Naive thymus-derived CD4-positive, alpha-beta T cell (primary cell): ENCODE measurements at regions of chr18 and their contacts with region 1.

Region 1: DNA sequence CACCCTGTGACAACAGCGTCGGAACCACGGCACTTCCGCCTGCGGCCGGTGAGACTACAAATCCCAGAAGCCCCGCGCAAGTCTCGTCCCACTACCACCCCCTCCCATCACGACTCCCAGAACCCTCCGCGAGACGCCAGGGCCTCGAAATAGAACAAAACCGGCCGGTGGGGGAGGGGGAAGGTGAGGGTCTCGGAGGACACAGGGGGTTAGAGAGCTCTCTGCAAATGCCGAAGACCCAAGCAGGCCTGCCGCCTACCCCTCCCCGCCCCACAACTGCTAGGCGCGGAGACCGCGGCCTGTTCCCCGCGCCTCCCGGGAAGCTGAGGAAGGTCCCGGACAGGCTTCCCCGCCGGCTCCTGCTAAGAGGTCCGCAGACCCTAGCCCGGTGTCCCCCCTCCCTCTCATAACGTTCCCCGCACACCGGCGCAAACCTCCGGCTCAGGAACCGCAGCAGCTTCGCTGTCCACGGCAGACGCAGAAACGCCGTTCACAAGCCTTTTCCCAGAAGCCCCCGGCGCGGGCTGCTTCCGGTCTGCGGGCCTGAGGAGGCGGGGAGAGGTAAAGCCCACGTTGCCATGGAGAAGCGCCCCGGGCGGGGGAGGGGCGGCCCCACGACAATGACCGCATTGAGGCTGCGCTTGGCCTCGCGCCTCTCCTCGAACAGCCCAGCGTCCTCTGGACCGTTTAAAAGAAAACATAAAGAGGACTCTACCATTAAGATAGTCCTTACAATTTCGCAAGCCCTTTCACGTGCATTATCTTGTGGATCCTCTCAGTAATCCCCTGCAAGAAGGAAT is at the start of gene ZNF24:
- DNase-seq: peak; percentile 83 to 92 (median 87)
- ATAC-seq: peak; percentile 92
- H3K4me3 ChIP-seq: peak within 1 kb of the TSS; percentile 96
- H3K4me3 Mint-ChIP-seq: peak within 1 kb of the TSS; percentile 93 to 100 (median 98)
- H3K27ac ChIP-seq: peak within 1 kb of the TSS; percentile 100
- H3K27ac Mint-ChIP-seq: peak within 1 kb of the TSS; percentile 91 to 98 (median 98)
- H3K4me1 ChIP-seq: peaks cover 23 to 25% of the 10 kb centered on the region in 2 donors
- H3K4me1 Mint-ChIP-seq: peaks cover 30 to 56% (median 45%) of the 10 kb centered on the region in 7 donors
- H3K27me3 ChIP-seq: no peaks in the 10 kb centered on the region
- H3K27me3 Mint-ChIP-seq: no peaks in the 10 kb centered on the region
- total RNA-seq, gene ZNF24: 55.6 to 98.1 (median 80.8) TPM

Region 2: DNA sequence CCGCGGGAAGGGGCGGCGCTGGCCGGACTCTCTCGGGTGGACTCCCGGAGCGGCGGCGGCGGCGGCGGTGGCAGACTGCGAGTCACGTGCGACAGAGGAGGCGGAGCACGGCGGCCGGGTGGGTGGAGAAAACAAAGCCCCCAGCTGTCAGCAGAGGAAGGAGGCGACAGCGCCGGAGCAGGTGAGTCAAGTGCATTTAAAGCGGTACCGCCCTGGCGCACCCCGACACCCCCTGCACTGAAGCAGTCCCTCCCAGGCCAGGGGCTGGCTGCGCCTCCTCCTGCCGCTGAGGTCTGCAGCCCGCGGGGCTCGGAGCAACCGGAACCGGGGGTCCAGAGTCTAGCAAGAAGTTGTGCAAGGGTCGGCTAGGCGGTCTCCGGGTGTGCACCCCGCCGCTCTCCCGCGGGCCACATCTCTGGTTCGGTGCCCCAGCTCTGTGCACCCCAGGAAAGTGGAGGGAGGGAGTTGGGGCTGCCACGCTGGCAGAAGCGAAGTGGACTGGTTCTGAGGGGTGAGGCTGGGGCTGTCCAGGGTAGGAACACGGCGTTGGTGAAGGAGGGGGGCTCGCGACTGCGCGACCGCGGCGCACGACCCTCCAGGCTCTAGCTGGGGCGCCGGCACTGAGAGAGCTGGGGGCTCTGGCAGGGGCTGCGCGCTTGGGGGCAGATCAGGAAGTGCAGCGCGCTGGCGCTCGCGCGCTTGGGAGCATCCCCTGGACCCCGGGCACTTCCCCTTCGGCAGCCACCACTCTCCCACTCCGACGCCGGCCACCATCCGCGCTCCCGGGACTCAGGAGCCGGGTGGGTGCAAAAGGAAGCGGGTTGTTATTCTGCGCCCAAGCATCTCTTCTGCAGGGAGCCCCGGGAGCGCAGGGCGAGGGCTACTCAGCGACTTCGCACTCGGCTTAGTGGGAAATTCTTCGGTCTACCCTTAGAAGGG is 367.0 kb before region 1 on chr18:
- CTCF ChIA-PET with region 1: no interaction called
- POLR2A ChIA-PET with region 1: no interaction called
- intact Hi-C with region 1: loop called in 1 of 2 experiments (anchors 1 kb)
- DNase-seq: peak; percentile 60 to 78 (median 72)
- ATAC-seq: peak; percentile 84
- H3K4me3 ChIP-seq: peak overlapping the region; percentile 74
- H3K4me3 Mint-ChIP-seq: peak overlapping the region; percentile 89 to 99 (median 94)
- H3K27ac ChIP-seq: peak overlapping the region; percentile 54
- H3K27ac Mint-ChIP-seq: peak overlapping the region in 6 of 9 donors; percentile 24 to 72 (median 39)
- H3K4me1 ChIP-seq: no peaks in the 10 kb centered on the region
- H3K4me1 Mint-ChIP-seq: peaks cover 18 to 37% (median 24%) of the 10 kb centered on the region in 7 donors
- H3K27me3 ChIP-seq: peaks cover 0 to 3% of the 10 kb centered on the region in 2 donors
- H3K27me3 Mint-ChIP-seq: peaks cover 0 to 66% (median 0%) of the 10 kb centered on the region in 5 donors

Region 3: DNA sequence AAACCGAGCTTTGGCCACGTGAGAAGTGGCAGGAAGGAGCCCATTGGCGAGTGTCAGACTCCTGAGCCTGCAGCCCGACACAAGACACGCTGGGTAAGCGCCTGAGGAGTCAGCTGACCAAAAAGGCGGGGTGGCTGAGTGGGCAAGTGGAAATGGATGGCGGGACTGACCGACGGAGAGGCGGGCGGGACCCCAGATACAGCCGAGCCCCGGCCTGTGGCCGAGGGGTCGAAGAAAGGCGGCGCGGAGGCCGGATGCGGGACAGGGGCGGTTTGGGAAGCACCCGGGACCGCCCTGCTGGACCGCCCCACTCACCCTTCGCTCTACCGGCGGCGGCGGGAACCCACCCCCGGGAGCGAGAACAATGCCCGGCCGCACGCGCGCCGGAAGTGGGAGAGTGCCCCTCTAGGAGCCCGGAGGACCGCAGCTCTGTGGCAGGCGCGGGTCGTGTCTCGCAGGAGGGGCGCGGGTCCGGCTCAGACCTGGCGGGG is 76.9 kb before region 1 on chr18:
- CTCF ChIA-PET with region 1: interaction called, 4 read pairs
- POLR2A ChIA-PET with region 1: interaction called, 12 read pairs
- intact Hi-C with region 1: loop called in 1 of 2 experiments (anchors 1 kb)
- DNase-seq: peak; percentile 37 to 62 (median 54)
- ATAC-seq: peak; percentile 90
- H3K4me3 ChIP-seq: peak overlapping the region; percentile 78
- H3K4me3 Mint-ChIP-seq: peak overlapping the region; percentile 85 to 99 (median 97)
- H3K27ac ChIP-seq: peak overlapping the region; percentile 74
- H3K27ac Mint-ChIP-seq: peak overlapping the region; percentile 83 to 98 (median 97)
- H3K4me1 ChIP-seq: peaks cover 0 to 7% of the 10 kb centered on the region in 2 donors
- H3K4me1 Mint-ChIP-seq: peaks cover 13 to 35% (median 26%) of the 10 kb centered on the region in 7 donors
- H3K27me3 ChIP-seq: no peaks in the 10 kb centered on the region
- H3K27me3 Mint-ChIP-seq: no peaks in the 10 kb centered on the region

Region 4: DNA sequence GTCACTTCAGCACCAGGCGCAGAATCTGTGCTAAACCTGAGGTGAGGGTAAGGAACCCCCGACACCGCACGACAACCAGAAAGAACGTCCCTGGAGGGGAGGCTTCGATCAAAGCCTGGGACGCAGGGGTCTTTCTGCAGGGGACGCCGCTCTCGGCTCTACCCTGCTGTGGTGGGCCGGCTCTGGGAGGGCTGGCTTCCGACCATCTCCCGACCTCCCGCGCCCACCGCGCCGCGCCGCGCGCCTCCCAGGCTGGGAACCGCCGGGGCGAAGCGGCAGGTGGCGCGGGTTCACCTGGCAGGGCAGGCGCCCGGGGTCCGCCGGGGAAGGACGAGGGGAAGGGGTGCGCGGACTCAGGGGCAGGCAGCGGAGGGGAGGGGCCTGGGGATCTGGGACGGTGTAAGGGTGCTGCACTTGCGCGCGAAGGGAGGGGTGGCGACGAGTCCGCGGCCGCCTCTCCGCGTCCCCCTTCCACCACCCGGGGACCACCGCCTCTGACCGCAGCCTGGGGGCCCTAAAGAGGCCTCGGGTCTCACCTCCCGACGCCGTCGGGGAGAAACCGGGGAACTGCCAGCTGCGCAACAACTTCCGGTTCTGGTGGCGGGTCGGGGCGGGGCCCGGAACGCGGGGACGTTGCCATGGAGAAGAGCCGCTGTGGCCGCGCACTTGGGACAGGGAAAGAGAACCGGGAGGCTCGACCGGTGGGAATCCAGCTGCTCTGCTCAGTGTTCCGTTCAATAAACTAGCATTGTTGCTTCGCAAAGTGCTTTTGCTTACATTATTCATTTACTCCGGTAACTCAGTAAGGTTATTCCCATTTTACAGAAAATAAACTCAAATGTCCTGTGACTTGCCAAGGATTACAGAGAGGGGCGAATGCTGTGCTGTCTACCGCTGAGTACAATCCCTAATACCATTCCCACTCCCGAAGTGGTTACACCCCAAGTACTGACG is 32.9 kb after region 1 on chr18 and contains the start of gene ZNF396:
- CTCF ChIA-PET with region 1: no interaction called
- POLR2A ChIA-PET with region 1: interaction called, 5 read pairs
- intact Hi-C with region 1: loop called (anchors 1 kb)
- DNase-seq: peak; percentile 51 to 72 (median 58)
- ATAC-seq: peak; percentile 81
- H3K4me3 ChIP-seq: peak within 1 kb of the TSS; percentile 75
- H3K4me3 Mint-ChIP-seq: peak within 1 kb of the TSS; percentile 80 to 92 (median 88)
- H3K27ac ChIP-seq: peak within 1 kb of the TSS; percentile 55
- H3K27ac Mint-ChIP-seq: peak within 1 kb of the TSS; percentile 44 to 90 (median 74)
- H3K4me1 ChIP-seq: no peaks in the 10 kb centered on the region
- H3K4me1 Mint-ChIP-seq: peaks cover 3 to 12% (median 10%) of the 10 kb centered on the region in 7 donors
- H3K27me3 ChIP-seq: no peaks in the 10 kb centered on the region
- H3K27me3 Mint-ChIP-seq: peaks cover 0 to 29% (median 0%) of the 10 kb centered on the region in 5 donors
- total RNA-seq, gene ZNF396: 0.11 to 8.2 (median 0.54) TPM

Region 5: DNA sequence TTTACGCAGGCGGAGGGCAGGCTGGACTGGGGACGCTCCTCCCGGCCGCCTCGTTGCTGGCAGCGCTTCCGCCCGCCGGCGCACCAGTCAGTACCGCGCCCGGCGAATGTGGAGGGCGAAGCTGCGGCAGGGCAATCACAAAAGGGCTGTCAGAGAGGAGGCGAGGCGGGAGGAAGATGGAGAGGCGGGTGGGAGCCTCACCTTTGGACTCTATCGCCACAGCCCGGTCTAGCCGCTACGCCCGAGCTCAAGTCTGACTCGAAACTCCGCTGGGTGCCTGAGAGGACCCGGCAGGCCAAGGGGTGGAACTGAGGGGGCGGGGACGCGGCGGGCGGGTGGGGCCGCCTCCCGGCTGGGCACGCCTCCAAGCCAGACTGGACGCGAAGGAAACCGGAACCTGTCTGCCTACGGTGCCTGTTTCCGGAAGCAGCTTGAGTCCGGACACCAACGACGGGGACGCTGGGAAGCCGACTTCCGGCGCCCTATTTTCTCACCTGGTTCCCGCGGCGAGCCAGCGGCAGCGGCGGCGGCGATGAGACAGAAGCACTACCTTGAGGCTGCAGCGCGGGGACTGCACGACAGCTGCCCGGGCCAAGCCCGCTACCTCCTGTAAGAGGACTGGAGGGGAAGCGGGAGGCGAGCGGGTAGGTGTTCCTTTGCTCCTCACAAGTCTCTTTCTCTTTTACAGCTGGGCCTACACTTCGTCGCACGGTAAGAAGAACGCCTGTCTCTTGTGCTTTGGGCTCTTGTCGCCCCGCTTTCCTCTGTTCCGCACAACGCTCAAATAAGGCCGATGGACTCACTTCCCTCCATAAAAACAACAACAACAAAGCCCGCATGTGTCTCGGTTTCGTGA is 628.3 kb after region 1 on chr18 and contains the start of gene RMP24:
- CTCF ChIA-PET with region 1: no interaction called
- POLR2A ChIA-PET with region 1: interaction called, 3 read pairs
- intact Hi-C with region 1: loop called (anchors 1 to 2 kb)
- DNase-seq: peak; percentile 80 to 93 (median 90)
- ATAC-seq: peak; percentile 94
- H3K4me3 ChIP-seq: peak within 1 kb of the TSS; percentile 76
- H3K4me3 Mint-ChIP-seq: peak within 1 kb of the TSS; percentile 83 to 100 (median 96)
- H3K27ac ChIP-seq: peak within 1 kb of the TSS; percentile 82
- H3K27ac Mint-ChIP-seq: peak within 1 kb of the TSS; percentile 91 to 99 (median 96)
- H3K4me1 ChIP-seq: peaks cover 33% of the 10 kb centered on the region in 2 donors
- H3K4me1 Mint-ChIP-seq: peaks cover 36 to 78% (median 67%) of the 10 kb centered on the region in 7 donors
- H3K27me3 ChIP-seq: no peaks in the 10 kb centered on the region
- H3K27me3 Mint-ChIP-seq: no peaks in the 10 kb centered on the region

Region 6: DNA sequence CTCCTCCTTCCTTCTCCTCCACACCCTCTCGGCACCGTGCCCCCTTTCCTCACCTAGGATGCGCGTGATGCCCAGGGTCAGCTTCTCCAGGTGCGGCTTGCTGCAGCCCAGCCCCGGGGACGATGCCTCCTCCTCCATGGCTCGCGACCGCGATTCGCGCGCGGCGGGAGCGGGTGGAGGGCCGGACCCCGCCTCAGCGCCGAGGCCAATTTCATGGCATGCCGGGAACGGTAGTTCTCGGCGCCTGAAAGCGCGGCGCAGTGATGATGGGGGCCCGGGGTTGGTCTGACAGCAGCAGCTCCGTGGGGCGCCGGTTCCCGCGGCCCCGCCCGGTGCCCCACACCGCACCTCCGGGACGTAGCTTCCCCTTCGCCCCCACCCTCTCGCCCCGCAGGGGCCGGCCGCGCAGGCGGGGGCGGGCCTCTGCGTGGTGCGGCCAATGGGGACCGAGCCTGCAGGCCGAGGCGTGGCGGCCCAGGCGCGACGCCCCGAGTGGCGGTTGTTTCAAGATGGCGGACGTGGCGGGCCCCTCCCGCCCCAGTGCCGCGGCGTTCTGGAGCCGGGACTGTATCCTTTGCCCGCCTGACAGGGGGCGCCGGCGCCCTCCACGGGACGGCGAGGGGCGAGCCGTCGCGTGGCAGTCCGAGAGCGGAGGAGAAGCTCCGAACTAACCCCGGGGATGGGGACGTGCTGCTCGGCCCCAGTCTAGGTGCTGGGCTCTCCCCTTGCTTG is 1484.7 kb after region 1 on chr18 and contains the starts of genes KIAA1328 and TPGS2:
- CTCF ChIA-PET with region 1: no interaction called
- POLR2A ChIA-PET with region 1: no interaction called
- intact Hi-C with region 1: loop called in 1 of 2 experiments (anchors 2 kb)
- DNase-seq: peak; percentile 77 to 90 (median 87)
- ATAC-seq: peak; percentile 96
- H3K4me3 ChIP-seq: peak within 1 kb of the TSS; percentile 79
- H3K4me3 Mint-ChIP-seq: peak within 1 kb of the TSS; percentile 73 to 98 (median 92)
- H3K27ac ChIP-seq: peak within 1 kb of the TSS; percentile 75
- H3K27ac Mint-ChIP-seq: peak within 1 kb of the TSS; percentile 57 to 98 (median 90)
- H3K4me1 ChIP-seq: peaks cover 15 to 18% of the 10 kb centered on the region in 2 donors
- H3K4me1 Mint-ChIP-seq: peaks cover 27 to 60% (median 47%) of the 10 kb centered on the region in 7 donors
- H3K27me3 ChIP-seq: no peaks in the 10 kb centered on the region
- H3K27me3 Mint-ChIP-seq: no peaks in the 10 kb centered on the region
- total RNA-seq, gene KIAA1328: 8.1 to 17.6 (median 16.0) TPM
- total RNA-seq, gene TPGS2: 16.9 to 92.8 (median 53.5) TPM